IMR-90 (cell line): ENCODE measurements at regions of chr5 and their contacts with region 1.

Region 1: DNA sequence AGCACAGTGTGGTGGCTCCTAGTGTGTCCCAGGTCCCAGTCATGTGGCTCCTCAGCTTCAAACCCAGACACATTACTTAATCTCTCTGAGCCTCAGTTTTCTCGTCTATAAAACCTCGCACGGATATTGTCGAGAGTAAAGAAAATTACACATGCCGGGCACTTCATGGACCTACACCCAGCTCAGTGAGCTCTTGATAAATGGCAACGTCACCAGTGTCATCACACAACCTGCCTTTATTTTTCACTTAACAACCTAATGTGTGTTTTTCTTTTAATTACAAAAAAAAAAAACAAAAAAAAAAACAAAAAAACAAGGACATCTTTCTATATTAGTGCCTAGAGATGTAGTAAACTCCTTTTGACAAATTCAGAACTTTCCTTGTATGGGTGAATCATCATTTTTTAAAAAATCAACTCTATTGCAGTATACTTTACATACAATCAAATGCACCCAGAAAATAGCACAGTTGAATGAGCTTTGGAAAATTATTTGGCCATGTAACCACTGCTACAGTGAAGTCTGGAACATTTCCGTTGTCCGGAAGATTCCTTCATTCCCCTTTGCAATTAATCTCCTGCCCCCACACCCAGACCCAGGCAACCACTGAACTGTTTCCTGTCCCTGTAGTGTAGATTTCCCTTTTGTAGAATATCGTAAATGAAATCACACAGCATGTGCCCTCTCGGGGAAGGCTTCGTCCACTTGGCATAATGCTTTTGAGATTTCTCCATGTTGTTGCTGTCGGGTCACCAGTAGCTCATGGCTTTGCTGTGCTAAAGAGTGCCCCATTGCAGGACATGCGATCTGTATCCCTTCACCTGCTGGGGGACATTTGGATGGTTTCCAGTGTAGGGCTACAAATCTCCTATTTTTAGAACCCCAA is 100.4 kb upstream of the LARP1 start:
- DNase-seq: no peak
- ATAC-seq: no peak
- H3K4me3 ChIP-seq: no peak overlapping the region
- H3K27ac ChIP-seq: no peak overlapping the region
- H3K4me1 ChIP-seq: peaks cover 4% of the 10 kb centered on the region; the same call in 1 of the 2 replicates
- H3K27me3 ChIP-seq: peaks cover 2% of the 10 kb centered on the region; the same call in 1 of the 2 replicates
- CTCF ChIP-seq: no peak
- POLR2A ChIP-seq: no peak
- RAD21 ChIP-seq: no peak

Region 2: GRCh38 chr5:154801083-154801482 is 146.4 kb after region 1 on chr5:
- CTCF ChIA-PET with region 1: interaction called, 3 read pairs
- POLR2A ChIA-PET with region 1: no interaction called
- dilution Hi-C with region 1: no loop called
- in situ Hi-C with region 1: loop called (anchors 5 kb)
- intact Hi-C with region 1: no loop called
- DNase-seq: peak; percentile 90
- ATAC-seq: peak; percentile 84
- H3K4me3 ChIP-seq: no peak overlapping the region
- H3K27ac ChIP-seq: no peak overlapping the region
- H3K4me1 ChIP-seq: peaks cover 8% of the 10 kb centered on the region
- H3K27me3 ChIP-seq: no peaks in the 10 kb centered on the region
- CTCF ChIP-seq: no peak
- POLR2A ChIP-seq: no peak
- RAD21 ChIP-seq: no peak

Region 3: DNA sequence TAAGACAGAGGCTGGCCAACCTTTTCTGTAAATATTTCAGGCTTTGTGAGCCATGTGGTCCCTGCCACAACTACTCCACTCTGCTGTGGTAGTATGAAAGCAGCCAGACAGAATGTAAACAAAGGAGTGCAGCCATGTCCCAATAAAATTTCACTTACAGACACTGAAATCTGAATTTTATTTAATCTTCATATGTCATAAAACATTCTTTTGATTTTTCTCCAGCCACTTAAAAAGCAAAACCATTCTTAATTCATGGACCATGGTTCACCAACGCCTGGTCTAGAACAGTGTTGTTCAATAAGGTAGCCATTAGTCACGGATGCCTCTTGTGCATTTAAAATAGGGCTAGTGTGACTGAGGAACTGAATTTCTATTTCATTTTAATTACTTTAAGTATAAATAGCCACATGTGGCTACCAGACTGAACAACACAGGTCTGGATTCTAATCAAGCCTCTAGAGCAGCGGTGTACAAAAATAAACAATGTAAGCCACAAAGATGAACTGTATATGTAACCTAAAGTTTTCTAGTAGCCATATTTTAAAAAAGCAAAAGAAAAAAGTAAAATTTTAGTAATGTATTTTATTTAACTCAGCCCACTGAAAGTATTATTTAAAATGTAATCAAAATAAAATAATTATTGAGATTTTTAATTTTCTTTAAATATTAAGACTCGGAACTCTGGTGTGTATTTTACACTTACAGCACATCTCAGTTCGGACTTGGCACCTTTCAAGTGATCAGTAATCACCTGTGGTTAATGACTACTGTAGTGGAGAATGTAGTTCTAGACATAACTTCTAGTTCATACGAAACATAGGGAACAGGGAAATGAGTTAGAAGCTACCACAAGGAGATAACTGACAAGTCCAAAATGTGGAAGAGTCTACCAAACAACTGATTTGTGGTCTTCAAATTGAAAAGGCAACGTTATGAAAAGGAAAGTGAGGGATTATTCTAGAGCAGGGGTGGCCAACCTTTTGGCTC is 269.0 kb after region 1 on chr5:
- CTCF ChIA-PET with region 1: no interaction called
- POLR2A ChIA-PET with region 1: interaction called, 6 read pairs
- dilution Hi-C with region 1: no loop called
- in situ Hi-C with region 1: no loop called
- intact Hi-C with region 1: loop called (anchors 5 kb)
- DNase-seq: peak; percentile 57
- ATAC-seq: peak; percentile 82
- H3K4me3 ChIP-seq: no peak overlapping the region
- H3K27ac ChIP-seq: no peak overlapping the region
- H3K4me1 ChIP-seq: no peaks in the 10 kb centered on the region
- H3K27me3 ChIP-seq: no peaks in the 10 kb centered on the region
- CTCF ChIP-seq: no peak
- POLR2A ChIP-seq: no peak
- RAD21 ChIP-seq: no peak